ENCODE measurements at regions of chr1 and their contacts with region 1.

Region 1: DNA sequence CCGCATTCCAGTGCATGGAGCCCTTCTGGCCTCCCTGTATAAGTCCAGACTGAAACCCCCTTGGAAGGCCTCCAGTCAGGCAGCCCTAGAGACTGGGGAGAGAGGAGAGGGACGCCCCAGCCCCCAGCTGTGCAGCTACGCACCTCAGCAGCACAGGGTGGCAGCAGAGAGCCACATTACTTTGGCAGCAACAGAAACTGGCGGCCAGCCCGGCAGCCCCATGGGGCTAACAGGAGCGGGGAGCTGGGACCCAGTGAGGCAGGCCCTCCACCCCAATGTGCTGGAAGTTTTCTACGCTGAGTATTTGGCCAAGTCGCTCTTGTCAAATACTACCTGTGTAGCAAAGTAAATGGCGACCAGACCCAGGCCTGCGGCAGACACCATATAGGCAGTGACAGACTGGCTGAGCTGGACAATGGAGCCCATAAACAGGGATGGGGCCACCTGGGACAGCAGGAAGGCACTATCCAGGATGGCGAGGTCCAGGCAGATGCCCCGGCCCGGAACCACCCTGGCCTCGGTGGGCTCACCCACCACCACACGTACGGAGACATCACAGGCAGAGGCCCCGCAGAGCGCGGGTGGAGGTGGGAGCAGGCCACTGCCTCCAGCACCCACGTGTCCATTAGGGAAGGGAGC is 21.2 kb downstream of the SLC45A3 start:
- DNase-seq: peak; percentile 86
- ATAC-seq: peak; percentile 97
- H3K4me3 Mint-ChIP-seq: no peak overlapping the region
- H3K27ac Mint-ChIP-seq: no peak overlapping the region
- H3K4me1 Mint-ChIP-seq: no peaks in the 10 kb centered on the region
- H3K27me3 Mint-ChIP-seq: no peaks in the 10 kb centered on the region
- CTCF ChIP-seq: peak; percentile 90

Region 2: GRCh38 chr1:205485338-205486228 is 173.5 kb before region 1 on chr1:
- CTCF ChIA-PET with region 1: interaction called, 41 read pairs
- POLR2A ChIA-PET with region 1: no interaction called
- intact Hi-C with region 1: no loop called
- DNase-seq: peak; percentile 79
- ATAC-seq: peak; percentile 76
- H3K4me3 Mint-ChIP-seq: no peak overlapping the region
- H3K27ac Mint-ChIP-seq: no peak overlapping the region
- H3K4me1 Mint-ChIP-seq: peaks cover 27% of the 10 kb centered on the region
- H3K27me3 Mint-ChIP-seq: peaks cover 42% of the 10 kb centered on the region
- CTCF ChIP-seq: peak; percentile 95

Region 3: GRCh38 chr1:205554026-205554811 is 104.8 kb before region 1 on chr1:
- CTCF ChIA-PET with region 1: interaction called, 16 read pairs
- POLR2A ChIA-PET with region 1: no interaction called
- intact Hi-C with region 1: no loop called
- DNase-seq: no peak
- ATAC-seq: no peak
- H3K4me3 Mint-ChIP-seq: no peak overlapping the region
- H3K27ac Mint-ChIP-seq: no peak overlapping the region
- H3K4me1 Mint-ChIP-seq: no peaks in the 10 kb centered on the region
- H3K27me3 Mint-ChIP-seq: peaks cover 41% of the 10 kb centered on the region
- CTCF ChIP-seq: no peak

Region 4: GRCh38 chr1:205582471-205583291 is 76.4 kb before region 1 on chr1:
- CTCF ChIA-PET with region 1: interaction called, 396 read pairs
- POLR2A ChIA-PET with region 1: no interaction called
- intact Hi-C with region 1: no loop called
- DNase-seq: peak; percentile 65
- ATAC-seq: peak; percentile 83
- H3K4me3 Mint-ChIP-seq: no peak overlapping the region
- H3K27ac Mint-ChIP-seq: peak overlapping the region; percentile 46
- H3K4me1 Mint-ChIP-seq: peaks cover 12% of the 10 kb centered on the region
- H3K27me3 Mint-ChIP-seq: peaks cover under 1% of the 10 kb centered on the region
- CTCF ChIP-seq: no peak

Region 5: GRCh38 chr1:205645519-205645918 is 13.5 kb before region 1 on chr1:
- CTCF ChIA-PET with region 1: interaction called, 120 read pairs
- POLR2A ChIA-PET with region 1: interaction called, 3 read pairs
- intact Hi-C with region 1: no loop called
- DNase-seq: no peak
- ATAC-seq: no peak
- H3K4me3 Mint-ChIP-seq: no peak overlapping the region
- H3K27ac Mint-ChIP-seq: no peak overlapping the region
- H3K4me1 Mint-ChIP-seq: no peaks in the 10 kb centered on the region
- H3K27me3 Mint-ChIP-seq: peaks cover 3% of the 10 kb centered on the region
- CTCF ChIP-seq: no peak

Region 6: GRCh38 chr1:205729945-205730610 is 71.0 kb after region 1 on chr1:
- CTCF ChIA-PET with region 1: interaction called, 13 read pairs
- POLR2A ChIA-PET with region 1: no interaction called
- intact Hi-C with region 1: no loop called
- DNase-seq: no peak
- ATAC-seq: no peak
- H3K4me3 Mint-ChIP-seq: no peak overlapping the region
- H3K27ac Mint-ChIP-seq: no peak overlapping the region
- H3K4me1 Mint-ChIP-seq: peaks cover 42% of the 10 kb centered on the region
- H3K27me3 Mint-ChIP-seq: no peaks in the 10 kb centered on the region
- CTCF ChIP-seq: no peak

Region 7: DNA sequence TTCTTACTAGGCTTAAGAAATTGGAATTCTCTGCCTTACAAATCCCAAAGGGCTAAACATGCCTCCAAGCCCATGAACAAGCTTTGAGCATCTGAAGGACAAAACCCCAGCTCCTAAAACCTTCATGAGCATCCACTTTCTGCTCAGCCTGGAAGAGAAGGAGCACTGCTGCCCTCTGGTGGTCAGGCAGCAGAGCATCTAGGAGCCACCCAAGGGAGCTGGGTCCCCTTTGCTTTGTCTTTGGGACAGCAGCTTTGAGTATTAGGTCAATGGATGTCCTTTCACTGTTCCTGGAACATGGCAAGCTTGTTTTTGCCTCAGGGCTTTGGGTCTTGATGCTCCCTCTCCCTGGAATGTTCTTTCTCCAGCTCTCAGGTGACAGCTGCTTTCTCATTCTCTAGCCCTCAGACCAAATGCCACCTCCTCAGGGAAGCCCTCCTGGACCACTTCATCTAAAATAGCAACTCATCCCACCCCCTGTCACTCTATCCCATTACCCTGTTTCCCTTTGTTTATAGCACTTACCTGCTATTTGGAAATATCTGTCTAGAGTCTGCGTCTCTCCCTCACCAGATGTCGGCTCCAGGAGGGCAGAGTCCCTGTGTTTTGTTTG is 318.4 kb after region 1 on chr1:
- CTCF ChIA-PET with region 1: interaction called, 112 read pairs
- POLR2A ChIA-PET with region 1: no interaction called
- intact Hi-C with region 1: loop called (anchors 5 kb)
- DNase-seq: peak; percentile 74
- ATAC-seq: peak; percentile 88
- H3K4me3 Mint-ChIP-seq: no peak overlapping the region
- H3K27ac Mint-ChIP-seq: no peak overlapping the region
- H3K4me1 Mint-ChIP-seq: no peaks in the 10 kb centered on the region
- H3K27me3 Mint-ChIP-seq: peaks cover 1% of the 10 kb centered on the region
- CTCF ChIP-seq: peak; percentile 87

Measured in activated CD8-positive, alpha-beta T cell treated with anti-CD3 and anti-CD28 coated beads for 36 hours (primary cell).